Activated CD4-positive, alpha-beta T cell treated with anti-CD3 and anti-CD28 coated beads, Interleukin-2, amount 10 ng/mL, durations not matched to agents 7 days and 5 days (primary cell): ENCODE measurements at regions of chr11 and their contacts with region 1.

Region 1: GRCh38 chr11:67401495-67402191 is at the start of gene PPP1CA:
- DNase-seq: peak; percentile 90
- H3K4me3 Mint-ChIP-seq: peak within 1 kb of the TSS; percentile 95
- H3K27ac Mint-ChIP-seq: peak within 1 kb of the TSS; percentile 97
- H3K4me1 Mint-ChIP-seq: peaks cover 61% of the 10 kb centered on the region
- H3K27me3 Mint-ChIP-seq: no peaks in the 10 kb centered on the region
- total RNA-seq, gene PPP1CA: 301 to 331 TPM

Region 2: GRCh38 chr11:67317205-67317887 is 84.3 kb before region 1 on chr11:
- CTCF ChIA-PET with region 1: interaction called, 11 read pairs
- POLR2A ChIA-PET with region 1: no interaction called
- DNase-seq: peak; percentile 99
- H3K4me3 Mint-ChIP-seq: peak overlapping the region; percentile 95
- H3K27ac Mint-ChIP-seq: peak overlapping the region; percentile 99
- H3K4me1 Mint-ChIP-seq: peaks cover 44% of the 10 kb centered on the region
- H3K27me3 Mint-ChIP-seq: peaks cover 3% of the 10 kb centered on the region

Region 3: DNA sequence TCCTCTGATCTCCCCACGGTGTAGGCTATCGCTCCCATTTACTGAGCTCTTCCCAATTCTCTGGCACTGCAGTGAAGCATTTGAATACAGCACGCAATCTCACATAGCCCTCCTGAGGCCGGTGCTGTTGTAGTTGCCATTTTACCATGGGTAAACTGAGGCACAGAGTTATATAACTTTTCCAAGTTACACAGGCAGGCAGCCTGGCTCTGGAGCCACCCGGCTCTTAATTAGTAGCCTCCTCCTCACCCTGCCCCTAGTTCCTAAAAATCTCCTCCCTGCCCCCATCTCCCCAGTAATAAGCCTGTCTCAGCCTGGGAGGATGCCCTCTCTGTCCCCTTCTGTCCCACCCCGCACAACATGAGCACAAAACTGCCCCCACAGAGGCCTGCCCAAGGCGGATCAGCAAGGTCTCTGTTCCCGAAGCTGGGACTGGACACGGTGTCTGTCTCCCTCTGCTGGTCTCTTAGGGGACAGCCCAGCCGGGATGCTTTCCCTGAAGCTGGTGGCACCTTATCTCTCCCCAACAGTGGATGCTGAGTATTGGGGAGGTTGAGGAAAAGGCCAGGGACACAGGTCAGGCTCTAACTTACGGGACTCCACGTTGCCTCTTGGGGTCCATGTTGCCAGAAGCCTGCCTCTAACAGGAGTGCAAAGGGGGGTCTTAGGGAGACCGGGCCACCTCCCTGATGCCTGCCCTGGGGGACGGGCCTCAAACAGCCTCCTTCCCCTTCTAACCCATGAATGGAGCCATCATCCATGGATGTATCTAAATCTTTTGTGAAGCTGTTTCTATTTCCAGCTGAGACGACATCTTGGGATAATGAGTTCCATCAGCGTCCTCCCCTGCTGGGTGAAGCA is 19.1 kb before region 1 on chr11:
- CTCF ChIA-PET with region 1: interaction called, 841 read pairs
- POLR2A ChIA-PET with region 1: no interaction called
- DNase-seq: peak; percentile 87
- H3K4me3 Mint-ChIP-seq: no peak overlapping the region
- H3K27ac Mint-ChIP-seq: no peak overlapping the region
- H3K4me1 Mint-ChIP-seq: peaks cover 6% of the 10 kb centered on the region
- H3K27me3 Mint-ChIP-seq: peaks cover 28% of the 10 kb centered on the region

Region 4: GRCh38 chr11:67415501-67416304 is 14.1 kb after region 1 on chr11 and contains the start of gene CARNS1:
- CTCF ChIA-PET with region 1: interaction called, 27 read pairs
- POLR2A ChIA-PET with region 1: no interaction called
- DNase-seq: no peak
- H3K4me3 Mint-ChIP-seq: peak within 1 kb of the TSS; percentile 45
- H3K27ac Mint-ChIP-seq: peak within 1 kb of the TSS; percentile 87
- H3K4me1 Mint-ChIP-seq: peaks cover 67% of the 10 kb centered on the region
- H3K27me3 Mint-ChIP-seq: peaks cover 1% of the 10 kb centered on the region
- total RNA-seq, gene CARNS1: 1.2 to 1.9 TPM

Region 5: GRCh38 chr11:67439321-67439883 is 37.8 kb after region 1 on chr11:
- CTCF ChIA-PET with region 1: interaction called, 29 read pairs
- POLR2A ChIA-PET with region 1: interaction called, 18 read pairs
- DNase-seq: peak; percentile 48
- H3K4me3 Mint-ChIP-seq: peak overlapping the region; percentile 98
- H3K27ac Mint-ChIP-seq: peak overlapping the region; percentile 94
- H3K4me1 Mint-ChIP-seq: peaks cover 59% of the 10 kb centered on the region
- H3K27me3 Mint-ChIP-seq: no peaks in the 10 kb centered on the region

Region 6: DNA sequence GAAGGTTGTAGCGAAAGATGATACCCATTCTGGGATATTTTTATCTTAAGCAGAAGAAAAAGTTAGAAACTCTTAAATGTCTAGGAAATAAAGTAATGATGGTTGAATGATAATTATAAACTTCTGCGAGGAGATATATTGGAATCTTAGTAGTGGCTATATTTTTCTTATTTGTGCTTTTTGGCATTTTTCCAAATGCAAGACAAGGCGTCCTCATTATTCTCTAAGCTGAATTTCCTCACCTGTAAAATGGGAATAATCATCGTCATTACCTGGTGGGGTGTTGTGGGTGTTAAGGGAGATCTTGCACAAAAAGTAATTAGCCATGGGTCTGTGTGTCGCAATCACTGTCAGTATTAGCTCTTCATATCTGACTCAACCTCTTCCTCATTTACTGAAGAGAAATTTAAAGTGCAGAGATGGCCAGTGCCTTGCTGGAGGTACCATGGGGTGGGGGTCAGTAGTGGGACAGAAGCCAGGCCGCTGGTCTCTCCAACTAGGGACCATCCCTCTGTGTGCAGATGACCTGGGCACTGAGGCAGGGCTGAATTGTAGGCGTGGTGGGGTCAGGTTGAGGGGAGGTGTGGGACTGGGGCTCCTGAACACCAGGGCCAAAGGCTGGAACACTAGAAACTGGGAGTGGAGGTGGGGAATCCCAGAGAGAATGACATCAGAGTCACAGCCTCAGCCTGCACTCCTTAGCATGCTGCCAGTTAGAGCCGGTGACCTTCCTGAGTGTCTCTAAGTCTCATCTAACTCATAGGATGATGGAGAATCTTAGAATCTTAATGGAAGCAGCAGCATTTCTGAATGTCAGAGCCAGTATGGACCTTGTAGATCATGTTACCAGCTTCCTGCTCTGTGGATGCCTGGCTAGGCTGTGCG is 99.4 kb after region 1 on chr11:
- CTCF ChIA-PET with region 1: interaction called, 13 read pairs
- POLR2A ChIA-PET with region 1: no interaction called
- DNase-seq: no peak
- H3K4me3 Mint-ChIP-seq: no peak overlapping the region
- H3K27ac Mint-ChIP-seq: no peak overlapping the region
- H3K4me1 Mint-ChIP-seq: peaks cover 34% of the 10 kb centered on the region
- H3K27me3 Mint-ChIP-seq: no peaks in the 10 kb centered on the region

Region 7: GRCh38 chr11:67523556-67524479 is 122.2 kb after region 1 on chr11:
- CTCF ChIA-PET with region 1: no interaction called
- POLR2A ChIA-PET with region 1: no interaction called
- DNase-seq: no peak
- H3K4me3 Mint-ChIP-seq: no peak overlapping the region
- H3K27ac Mint-ChIP-seq: no peak overlapping the region
- H3K4me1 Mint-ChIP-seq: no peaks in the 10 kb centered on the region
- H3K27me3 Mint-ChIP-seq: peaks cover 8% of the 10 kb centered on the region